Activated CD4-positive, alpha-beta T cell treated with anti-CD3 and anti-CD28 coated beads for 36 hours (primary cell): ENCODE measurements at regions of chr15 and their contacts with region 1.

Region 1: DNA sequence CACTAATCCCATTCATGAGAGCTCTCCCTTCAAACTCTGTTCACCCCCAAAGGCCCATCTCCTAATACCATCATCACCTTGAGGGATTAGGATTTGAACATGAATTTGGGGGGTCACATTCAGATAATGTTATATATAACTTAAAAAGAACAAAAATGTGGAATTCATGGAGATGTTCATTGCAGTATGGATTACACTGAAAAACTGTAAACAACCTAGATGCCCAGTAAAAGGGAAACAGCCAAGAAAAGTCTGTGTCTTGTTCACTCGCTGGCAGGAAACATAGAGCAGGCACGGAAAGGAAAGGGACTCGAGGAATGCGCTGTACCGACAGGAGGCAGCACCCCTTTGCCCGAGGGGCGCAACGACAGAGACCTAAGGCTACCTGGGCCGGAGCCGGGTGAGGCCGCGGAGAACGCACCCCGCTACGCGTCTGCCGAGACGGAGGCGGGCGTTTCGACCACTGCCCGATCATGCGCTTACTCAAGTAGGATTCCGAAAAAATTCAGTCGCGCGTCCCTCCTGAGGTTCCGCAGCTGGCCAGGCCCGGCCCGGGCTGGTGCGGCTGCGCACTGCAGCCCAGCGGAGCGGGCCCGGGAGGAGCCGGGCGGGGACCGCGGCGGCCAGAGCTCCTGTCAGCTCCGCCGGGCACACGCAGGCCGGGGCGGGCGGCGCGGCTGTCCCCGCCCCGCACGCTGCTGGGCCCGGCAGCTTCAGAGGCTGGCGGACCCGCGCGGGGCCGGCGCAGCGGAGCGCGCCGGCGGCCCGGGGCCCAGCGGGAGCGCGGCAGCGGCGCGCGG is 862 bp upstream of the MAN2A2 start:
- DNase-seq: peak; percentile 83
- ATAC-seq: peak; percentile 79
- H3K4me3 Mint-ChIP-seq: peak overlapping the region; percentile 81
- H3K27ac Mint-ChIP-seq: peak overlapping the region; percentile 88
- H3K4me1 Mint-ChIP-seq: peaks cover 16% of the 10 kb centered on the region
- H3K27me3 Mint-ChIP-seq: no peaks in the 10 kb centered on the region

Region 2: GRCh38 chr15:90679959-90680358 is 222.3 kb before region 1 on chr15:
- CTCF ChIA-PET with region 1: no interaction called
- POLR2A ChIA-PET with region 1: no interaction called
- intact Hi-C with region 1: no loop called
- DNase-seq: no peak
- ATAC-seq: no peak
- H3K4me3 Mint-ChIP-seq: no peak overlapping the region
- H3K27ac Mint-ChIP-seq: no peak overlapping the region
- H3K4me1 Mint-ChIP-seq: peaks cover 44% of the 10 kb centered on the region
- H3K27me3 Mint-ChIP-seq: peaks cover 3% of the 10 kb centered on the region

Region 3: GRCh38 chr15:90924375-90924774 is 22.1 kb after region 1 on chr15:
- CTCF ChIA-PET with region 1: interaction called, 164 read pairs
- POLR2A ChIA-PET with region 1: interaction called, 11 read pairs
- intact Hi-C with region 1: no loop called
- DNase-seq: peak; percentile 41
- ATAC-seq: peak; percentile 72
- H3K4me3 Mint-ChIP-seq: no peak overlapping the region
- H3K27ac Mint-ChIP-seq: peak overlapping the region; percentile 58
- H3K4me1 Mint-ChIP-seq: peaks cover 34% of the 10 kb centered on the region
- H3K27me3 Mint-ChIP-seq: no peaks in the 10 kb centered on the region

Region 4: GRCh38 chr15:91049378-91050127 is 147.3 kb after region 1 on chr15:
- CTCF ChIA-PET with region 1: interaction called, 3 read pairs
- POLR2A ChIA-PET with region 1: no interaction called
- intact Hi-C with region 1: loop called in 1 of 2 experiments (anchors 1 kb)
- DNase-seq: peak; percentile 68
- ATAC-seq: peak; percentile 96
- H3K4me3 Mint-ChIP-seq: no peak overlapping the region
- H3K27ac Mint-ChIP-seq: no peak overlapping the region
- H3K4me1 Mint-ChIP-seq: peaks cover 23% of the 10 kb centered on the region
- H3K27me3 Mint-ChIP-seq: peaks cover 11% of the 10 kb centered on the region

Region 5: GRCh38 chr15:91529534-91529933 is 627.3 kb after region 1 on chr15:
- CTCF ChIA-PET with region 1: no interaction called
- POLR2A ChIA-PET with region 1: no interaction called
- intact Hi-C with region 1: no loop called
- DNase-seq: no peak
- ATAC-seq: no peak
- H3K4me3 Mint-ChIP-seq: no peak overlapping the region
- H3K27ac Mint-ChIP-seq: no peak overlapping the region
- H3K4me1 Mint-ChIP-seq: peaks cover 4% of the 10 kb centered on the region
- H3K27me3 Mint-ChIP-seq: peaks cover 10% of the 10 kb centered on the region